ENCODE measurements at regions of chr10 and their contacts with region 1.

Region 1: DNA sequence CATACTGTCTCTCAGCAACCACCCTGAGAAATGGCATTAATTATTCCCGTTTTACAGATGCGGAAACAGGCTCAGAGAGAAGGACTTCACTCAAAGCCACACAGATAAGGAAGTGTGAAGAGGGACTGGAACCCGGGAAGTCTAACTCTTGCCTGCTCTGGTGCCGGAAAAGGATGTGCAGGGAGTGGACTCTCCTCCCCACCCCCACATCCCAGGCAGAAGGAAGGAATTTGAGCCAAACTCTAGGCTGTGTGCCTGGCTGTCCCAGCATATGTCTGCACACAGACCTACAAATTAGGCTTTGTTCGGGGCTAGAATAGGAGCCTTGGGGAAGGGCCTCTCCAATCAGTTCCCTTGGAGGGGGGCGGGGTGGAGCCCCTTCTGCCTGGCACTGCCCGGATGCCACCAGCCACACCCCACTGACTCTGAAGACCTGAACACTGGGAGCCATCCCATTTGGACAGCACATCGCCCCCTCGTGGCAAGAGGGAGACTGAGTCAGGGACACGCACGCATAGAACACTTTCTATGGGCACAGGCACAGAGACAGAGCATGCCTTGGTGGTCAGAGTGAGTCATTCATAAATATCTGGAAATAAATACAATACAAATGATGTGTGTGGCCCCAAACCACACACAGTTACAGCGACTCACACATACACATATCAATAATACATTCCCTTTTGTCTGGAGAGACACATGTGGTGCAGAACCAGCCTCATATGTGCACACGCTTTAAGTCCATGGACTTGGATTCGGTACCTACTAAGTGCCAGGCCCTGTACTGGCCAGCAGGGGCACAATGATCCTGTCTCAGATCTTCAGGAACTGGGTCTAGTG is 13.1 kb downstream of the LZTS2 start:
- DNase-seq: peak; percentile 82

Region 2: GRCh38 chr10:100993986-100994708 is 18.6 kb before region 1 on chr10:
- CTCF ChIA-PET with region 1: interaction called, 50 read pairs
- POLR2A ChIA-PET with region 1: interaction called, 27 read pairs
- DNase-seq: peak; percentile 61